Panc1 (cell line): ENCODE measurements at regions of chr9 and their contacts with region 1.

Region 1: GRCh38 chr9:125079931-125080330 is 63.4 kb downstream of the SCAI start:
- DNase-seq: no peak
- ATAC-seq: no peak
- H3K4me3 ChIP-seq: no peak overlapping the region
- H3K27ac ChIP-seq: no peak overlapping the region
- H3K4me1 ChIP-seq: no peaks in the 10 kb centered on the region
- H3K27me3 ChIP-seq: no peaks in the 10 kb centered on the region
- CTCF ChIP-seq: no peak

Region 2: DNA sequence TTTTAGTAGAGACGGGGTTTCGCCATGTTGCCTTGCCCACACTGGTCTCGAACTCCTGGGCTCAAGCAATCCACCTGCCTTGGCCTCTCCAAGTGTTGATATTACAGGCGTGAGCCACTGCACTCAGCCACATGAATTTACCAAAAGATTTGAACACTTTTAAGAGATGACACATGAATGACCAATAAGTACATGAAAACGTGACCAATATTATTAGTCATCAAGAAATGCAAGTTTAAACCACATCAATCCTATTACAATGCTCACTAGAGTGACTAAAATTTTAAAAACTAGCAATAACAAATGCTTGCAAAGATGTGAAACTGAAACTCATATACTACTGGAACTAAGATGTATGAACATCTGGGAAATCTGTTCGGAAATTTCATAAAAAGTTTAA is 363.1 kb before region 1 on chr9:
- CTCF ChIA-PET with region 1: no interaction called
- POLR2A ChIA-PET with region 1: no interaction called
- in situ Hi-C with region 1: no loop called
- intact Hi-C with region 1: no loop called
- DNase-seq: no peak
- ATAC-seq: no peak
- H3K4me3 ChIP-seq: no peak overlapping the region
- H3K27ac ChIP-seq: no peak overlapping the region
- H3K4me1 ChIP-seq: peaks cover 10% of the 10 kb centered on the region
- H3K27me3 ChIP-seq: no peaks in the 10 kb centered on the region
- CTCF ChIP-seq: no peak

Region 3: DNA sequence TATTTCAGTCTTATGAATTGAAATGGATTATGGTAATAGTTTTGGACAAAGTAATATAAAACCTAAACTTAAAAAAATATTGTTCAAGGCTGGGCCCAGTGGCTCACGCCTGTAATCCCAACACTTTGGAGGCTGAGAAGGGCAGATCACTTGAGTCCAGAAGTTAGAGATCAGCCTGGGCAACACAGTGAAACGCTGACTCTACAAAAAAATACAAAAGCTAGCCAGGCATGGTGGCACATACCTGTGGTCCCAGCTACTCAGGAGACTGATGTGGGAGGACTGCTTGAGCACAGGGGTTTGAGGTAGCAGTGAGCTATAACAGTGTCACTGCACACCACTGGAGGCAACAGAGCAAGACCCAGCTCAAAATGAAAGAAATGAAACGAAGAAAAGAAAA is 18.5 kb before region 1 on chr9:
- CTCF ChIA-PET with region 1: no interaction called
- POLR2A ChIA-PET with region 1: interaction called, 13 read pairs
- in situ Hi-C with region 1: no loop called
- intact Hi-C with region 1: no loop called
- DNase-seq: no peak
- ATAC-seq: no peak
- H3K4me3 ChIP-seq: no peak overlapping the region
- H3K27ac ChIP-seq: no peak overlapping the region
- H3K4me1 ChIP-seq: no peaks in the 10 kb centered on the region
- H3K27me3 ChIP-seq: no peaks in the 10 kb centered on the region
- CTCF ChIP-seq: no peak

Region 4: GRCh38 chr9:125183054-125183453 is 103.1 kb after region 1 on chr9:
- CTCF ChIA-PET with region 1: no interaction called
- POLR2A ChIA-PET with region 1: no interaction called
- in situ Hi-C with region 1: no loop called
- intact Hi-C with region 1: no loop called
- DNase-seq: no peak
- ATAC-seq: no peak
- H3K4me3 ChIP-seq: no peak overlapping the region
- H3K27ac ChIP-seq: no peak overlapping the region
- H3K4me1 ChIP-seq: no peaks in the 10 kb centered on the region
- H3K27me3 ChIP-seq: no peaks in the 10 kb centered on the region
- CTCF ChIP-seq: no peak

Region 5: DNA sequence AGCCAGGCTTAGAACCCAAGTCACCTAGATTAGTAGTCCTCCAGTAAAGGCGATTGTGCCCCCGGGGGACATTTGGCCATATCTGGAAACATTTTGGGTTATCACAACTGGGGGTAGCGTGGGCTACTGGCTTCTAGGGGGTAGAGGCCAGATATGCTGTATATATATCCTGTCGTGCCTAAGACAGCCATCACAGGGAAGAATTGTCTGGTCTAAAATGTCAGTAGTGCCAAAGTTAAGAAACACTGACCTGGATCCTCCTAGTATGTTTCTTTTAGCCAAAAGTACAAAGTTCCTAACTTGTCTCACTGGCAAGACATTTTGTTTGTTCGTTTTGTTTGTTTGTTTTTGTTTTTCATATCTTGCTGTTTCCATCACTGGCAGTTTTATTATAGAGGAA is 134.3 kb after region 1 on chr9:
- CTCF ChIA-PET with region 1: no interaction called
- POLR2A ChIA-PET with region 1: no interaction called
- in situ Hi-C with region 1: no loop called
- intact Hi-C with region 1: no loop called
- DNase-seq: no peak
- ATAC-seq: no peak
- H3K4me3 ChIP-seq: no peak overlapping the region
- H3K27ac ChIP-seq: no peak overlapping the region
- H3K4me1 ChIP-seq: no peaks in the 10 kb centered on the region; the same call in 1 of the 2 replicates
- H3K27me3 ChIP-seq: no peaks in the 10 kb centered on the region
- CTCF ChIP-seq: no peak